Activated naive CD4-positive, alpha-beta T cell treated with anti-CD3 and anti-CD28 coated beads for 36 hours (primary cell): ENCODE measurements at regions of chr3 and their contacts with region 1.

Region 1: GRCh38 chr3:171459942-171460724 is at the start of gene TNIK:
- DNase-seq: peak; percentile 96
- H3K4me3 Mint-ChIP-seq: peak within 1 kb of the TSS; percentile 84
- H3K27ac Mint-ChIP-seq: peak within 1 kb of the TSS; percentile 88
- H3K4me1 Mint-ChIP-seq: peaks cover 36% of the 10 kb centered on the region
- H3K27me3 Mint-ChIP-seq: no peaks in the 10 kb centered on the region
- total RNA-seq, gene TNIK: 27.0 to 28.8 TPM

Region 2: DNA sequence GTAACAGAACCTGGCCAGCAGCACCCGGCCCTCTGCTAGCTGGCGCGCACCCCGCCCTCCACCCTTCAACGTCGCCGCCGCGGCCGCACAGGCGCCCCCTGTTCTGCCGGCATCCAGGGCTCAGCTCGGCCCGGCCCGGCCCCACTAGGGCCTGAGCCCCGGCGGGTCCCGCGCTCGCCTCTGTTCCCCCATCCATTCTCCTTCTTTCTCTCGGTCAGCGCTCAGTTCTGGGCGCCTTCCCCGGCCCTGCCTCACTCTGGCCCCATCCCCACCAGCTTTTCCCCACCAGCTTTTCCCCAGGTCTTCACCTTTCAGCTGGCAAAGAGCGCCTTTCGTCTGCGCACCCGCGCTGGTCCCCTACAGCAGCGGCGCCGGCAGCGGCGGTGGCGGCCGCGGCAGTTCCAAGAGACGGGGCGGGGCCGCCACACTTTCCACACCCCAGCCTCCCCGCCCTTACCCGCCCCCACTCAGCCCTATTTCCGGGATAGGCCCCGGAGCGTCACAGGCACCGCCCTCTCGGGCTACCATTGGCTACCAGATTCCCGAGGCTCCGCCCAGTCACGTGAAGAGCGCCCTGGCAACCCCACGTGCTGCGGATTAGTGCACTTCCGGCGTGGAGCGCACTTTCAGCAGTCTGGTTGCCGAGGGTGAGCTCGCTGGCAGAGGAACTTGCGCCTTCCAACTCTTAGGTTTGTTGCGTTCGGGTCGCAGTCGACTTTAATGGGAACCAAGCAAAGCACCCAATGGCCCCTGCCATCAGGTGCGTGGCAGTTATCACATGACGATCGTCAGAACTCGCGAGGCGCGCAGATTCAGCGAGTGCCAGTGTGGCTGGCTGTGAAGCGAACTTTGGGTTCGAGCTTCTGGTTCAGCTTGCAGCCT is 551.7 kb before region 1 on chr3 and contains the start of gene EIF5A2:
- CTCF ChIA-PET with region 1: no interaction called
- intact Hi-C with region 1: loop called (anchors 1 kb)
- DNase-seq: peak; percentile 97
- H3K4me3 Mint-ChIP-seq: peak within 1 kb of the TSS; percentile 95
- H3K27ac Mint-ChIP-seq: peak within 1 kb of the TSS; percentile 80
- H3K4me1 Mint-ChIP-seq: peaks cover 22% of the 10 kb centered on the region
- H3K27me3 Mint-ChIP-seq: no peaks in the 10 kb centered on the region
- total RNA-seq, gene EIF5A2: 3.4 to 5.2 TPM

Region 3: DNA sequence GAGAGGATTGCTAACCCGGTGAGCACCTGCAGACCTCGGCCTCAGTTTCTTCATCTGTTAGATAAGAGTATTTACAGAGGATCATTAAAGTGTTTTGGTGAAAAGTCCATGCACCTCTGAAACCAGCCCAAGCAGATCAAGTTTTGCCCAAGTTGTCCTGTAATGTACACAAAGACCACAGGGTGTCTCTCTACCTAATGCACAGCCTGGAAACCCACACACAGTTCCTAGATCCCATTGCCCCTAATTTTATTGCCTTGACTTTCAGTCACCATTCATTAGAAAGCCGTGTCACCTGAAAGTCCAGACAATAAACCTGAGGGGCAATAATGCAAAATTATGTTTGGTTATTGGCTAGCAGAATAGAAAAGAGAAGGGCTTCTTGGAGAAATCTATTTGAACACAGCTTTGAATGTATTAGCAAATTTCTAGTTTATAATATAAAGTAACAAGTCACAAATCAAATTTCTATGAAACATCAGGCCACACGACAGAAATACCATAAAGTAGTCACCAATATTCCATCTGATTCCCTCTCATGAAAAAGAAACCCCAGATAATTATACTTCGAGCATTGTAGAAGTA is 272.3 kb before region 1 on chr3:
- CTCF ChIA-PET with region 1: interaction called, 3 read pairs
- intact Hi-C with region 1: loop called (anchors 1 kb)
- DNase-seq: peak; percentile 35
- H3K4me3 Mint-ChIP-seq: no peak overlapping the region
- H3K27ac Mint-ChIP-seq: no peak overlapping the region
- H3K4me1 Mint-ChIP-seq: peaks cover 49% of the 10 kb centered on the region
- H3K27me3 Mint-ChIP-seq: no peaks in the 10 kb centered on the region

Region 4: DNA sequence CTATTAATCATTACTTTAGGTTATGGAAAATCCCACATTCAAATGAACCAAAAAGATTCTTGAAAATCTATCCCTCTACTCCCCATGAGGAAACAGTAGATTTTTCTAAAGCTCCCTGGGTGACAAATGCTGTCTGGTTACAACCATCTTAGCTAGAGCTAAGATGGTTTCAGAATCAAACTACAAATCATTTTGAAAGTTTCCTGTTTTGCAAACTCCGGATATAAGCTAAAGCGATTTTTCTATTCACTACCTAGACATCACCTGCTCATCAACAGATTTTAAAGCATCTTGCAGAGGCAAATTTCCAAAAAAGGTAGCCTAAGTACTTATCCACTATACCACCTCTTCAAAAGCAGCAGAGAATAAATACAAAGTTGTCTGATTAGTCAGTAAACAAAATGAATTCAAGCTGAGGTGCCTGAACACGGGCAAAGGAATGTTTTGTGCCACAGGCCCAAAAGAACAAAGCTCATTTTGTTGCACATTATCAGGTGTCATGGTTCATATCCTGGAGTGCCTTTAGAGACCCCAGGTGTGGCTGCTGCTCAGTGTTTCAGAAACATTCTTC is 204.8 kb before region 1 on chr3:
- CTCF ChIA-PET with region 1: interaction called, 4 read pairs
- intact Hi-C with region 1: loop called (anchors 2 kb)
- DNase-seq: no peak
- H3K4me3 Mint-ChIP-seq: no peak overlapping the region
- H3K27ac Mint-ChIP-seq: peak overlapping the region; percentile 78
- H3K4me1 Mint-ChIP-seq: peaks cover 86% of the 10 kb centered on the region
- H3K27me3 Mint-ChIP-seq: no peaks in the 10 kb centered on the region

Region 5: GRCh38 chr3:171347301-171348039 is 112.7 kb before region 1 on chr3:
- CTCF ChIA-PET with region 1: no interaction called
- intact Hi-C with region 1: loop called (anchors 5 kb)
- DNase-seq: no peak
- H3K4me3 Mint-ChIP-seq: no peak overlapping the region
- H3K27ac Mint-ChIP-seq: no peak overlapping the region
- H3K4me1 Mint-ChIP-seq: peaks cover 67% of the 10 kb centered on the region
- H3K27me3 Mint-ChIP-seq: no peaks in the 10 kb centered on the region

Region 6: DNA sequence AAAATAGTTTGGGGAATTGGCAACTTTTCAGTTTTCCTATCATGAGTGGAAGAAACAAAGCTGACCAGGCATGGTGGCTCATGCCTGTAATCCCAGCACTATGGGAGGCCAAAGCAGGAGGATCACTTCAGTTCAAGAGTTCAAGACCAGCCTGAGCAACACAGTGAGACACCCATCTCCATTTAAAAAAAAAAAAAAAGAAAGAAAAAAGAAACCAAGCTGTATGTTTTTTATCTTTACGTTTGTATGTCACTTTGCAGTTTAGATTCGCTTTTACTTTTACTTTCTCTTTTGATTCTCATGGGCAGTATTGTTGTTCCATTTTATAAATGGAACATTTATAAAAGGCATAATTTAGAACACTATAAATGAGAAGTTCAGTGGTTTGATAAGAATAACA is 31.2 kb after region 1 on chr3:
- CTCF ChIA-PET with region 1: interaction called, 8 read pairs
- intact Hi-C with region 1: loop called (anchors 1 kb)
- DNase-seq: no peak
- H3K4me3 Mint-ChIP-seq: peak overlapping the region; percentile 51
- H3K27ac Mint-ChIP-seq: peak overlapping the region; percentile 62
- H3K4me1 Mint-ChIP-seq: peaks cover 34% of the 10 kb centered on the region
- H3K27me3 Mint-ChIP-seq: no peaks in the 10 kb centered on the region